Aorta (tissue), 5 donors: ENCODE measurements at regions of chr21 and their contacts with region 1.

Region 1: GRCh38 chr21:37366482-37367316 is at the start of gene DYRK1A:
- DNase-seq: peak; percentile 99
- ATAC-seq: peak; percentile 97
- H3K4me3 ChIP-seq: peak within 1 kb of the TSS; percentile 96 to 98
- H3K27ac ChIP-seq: peak within 1 kb of the TSS; percentile 99
- H3K4me1 ChIP-seq: peaks cover 0 to 1% of the 10 kb centered on the region in 2 donors
- H3K27me3 ChIP-seq: no peaks in the 10 kb centered on the region
- total RNA-seq, gene DYRK1A: 70.0 to 76.6 TPM

Region 2: GRCh38 chr21:37072988-37073416 is 293.7 kb before region 1 on chr21 and contains the starts of genes PIGP and TTC3:
- intact Hi-C with region 1: loop called in 1 of 2 experiments (anchors 5 kb)
- DNase-seq: peak; percentile 97 to 99
- ATAC-seq: peak; percentile 96
- H3K4me3 ChIP-seq: peak within 1 kb of the TSS; percentile 55 to 78
- H3K27ac ChIP-seq: peak within 1 kb of the TSS; percentile 97 to 98
- H3K4me1 ChIP-seq: no peaks in the 10 kb centered on the region
- H3K27me3 ChIP-seq: no peaks in the 10 kb centered on the region
- total RNA-seq, gene PIGP: 15.8 to 18.1 TPM
- total RNA-seq, gene TTC3: 105 to 118 TPM

Region 3: GRCh38 chr21:37267269-37268184 is 99.2 kb before region 1 on chr21 and contains the start of gene VPS26C:
- intact Hi-C with region 1: loop called (anchors 1 to 2 kb)
- DNase-seq: peak; percentile 99
- ATAC-seq: peak; percentile 99
- H3K4me3 ChIP-seq: peak within 1 kb of the TSS; percentile 72 to 76
- H3K27ac ChIP-seq: peak within 1 kb of the TSS; percentile 16 to 93
- H3K4me1 ChIP-seq: peaks cover 0 to 4% of the 10 kb centered on the region in 2 donors
- H3K27me3 ChIP-seq: no peaks in the 10 kb centered on the region
- total RNA-seq, gene VPS26C: 46.5 to 61.6 TPM

Region 4: GRCh38 chr21:37412603-37413360 is 46.1 kb after region 1 on chr21:
- intact Hi-C with region 1: loop called in 1 of 2 experiments (anchors 5 kb)
- DNase-seq: no peak
- ATAC-seq: no peak
- H3K4me3 ChIP-seq: no peak overlapping the region
- H3K27ac ChIP-seq: peak overlapping the region in 1 of 2 donors; percentile 79
- H3K4me1 ChIP-seq: peaks cover 1 to 15% of the 10 kb centered on the region in 2 donors
- H3K27me3 ChIP-seq: no peaks in the 10 kb centered on the region

Region 5: GRCh38 chr21:37563641-37564340 is 197.1 kb after region 1 on chr21:
- intact Hi-C with region 1: loop called (anchors 5 to 10 kb)
- DNase-seq: peak; percentile 97 to 98
- ATAC-seq: peak; percentile 98
- H3K4me3 ChIP-seq: peak overlapping the region; percentile 43 to 58
- H3K27ac ChIP-seq: peak overlapping the region; percentile 40 to 88
- H3K4me1 ChIP-seq: no peaks in the 10 kb centered on the region
- H3K27me3 ChIP-seq: no peaks in the 10 kb centered on the region

Region 6: DNA sequence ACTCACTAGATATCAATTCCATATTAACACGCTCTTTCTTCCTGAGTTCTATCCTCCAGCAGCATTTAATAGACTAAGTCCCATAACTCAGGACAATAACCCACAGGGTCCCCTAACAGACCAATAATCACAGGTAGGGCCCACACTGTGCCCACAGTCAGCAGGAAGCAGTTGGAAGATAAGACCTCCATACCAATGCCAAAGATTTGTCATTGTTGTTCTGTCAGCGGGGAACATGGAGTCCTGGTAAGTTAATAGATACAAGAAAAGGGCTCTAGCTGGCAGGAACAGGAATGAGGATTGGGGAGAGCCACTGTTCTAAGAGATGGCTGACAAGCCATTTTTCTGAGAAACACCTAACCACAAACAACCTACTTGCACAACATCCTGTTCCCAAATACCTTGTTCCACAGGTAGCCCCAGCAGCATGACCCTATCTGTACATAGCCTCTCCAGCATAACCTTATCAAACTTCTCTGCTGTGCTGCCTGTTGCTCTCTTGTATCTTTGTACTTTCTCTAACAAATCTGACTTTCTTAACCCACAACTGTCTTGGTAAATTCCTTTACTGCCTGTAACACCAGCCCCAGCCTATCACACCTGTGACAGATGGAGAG is 748.1 kb after region 1 on chr21:
- intact Hi-C with region 1: no loop called
- DNase-seq: no peak
- ATAC-seq: no peak
- H3K4me3 ChIP-seq: no peak overlapping the region
- H3K27ac ChIP-seq: no peak overlapping the region
- H3K4me1 ChIP-seq: no peaks in the 10 kb centered on the region
- H3K27me3 ChIP-seq: peaks cover 0 to 1% of the 10 kb centered on the region in 2 donors